ENCODE measurements at regions of chr1 and their contacts with region 1.

Region 1: DNA sequence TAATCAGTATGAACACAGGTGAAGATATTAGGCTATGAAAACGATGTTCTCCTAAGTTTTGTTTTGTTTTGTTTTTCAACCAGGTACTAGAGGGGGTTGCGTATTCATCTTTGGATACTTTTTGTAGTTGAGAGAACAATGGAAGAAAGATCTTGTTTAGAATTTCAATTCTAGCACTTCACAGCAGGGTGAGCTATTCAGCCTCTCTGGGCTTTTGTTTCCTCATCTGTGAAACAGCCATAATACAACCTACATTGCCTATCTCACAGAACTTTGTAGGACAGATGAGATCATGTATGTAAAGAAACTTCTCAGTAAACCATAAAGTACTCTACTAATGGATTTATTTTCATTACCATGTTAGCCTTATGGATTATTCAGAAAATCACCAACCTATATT is 199.5 kb downstream of the GPATCH2 start:
- DNase-seq: no peak
- H3K4me3 ChIP-seq: no peak overlapping the region
- H3K27ac ChIP-seq: no peak overlapping the region
- H3K4me1 ChIP-seq: peaks cover 7% of the 10 kb centered on the region
- H3K27me3 ChIP-seq: no peaks in the 10 kb centered on the region
- CTCF ChIP-seq: peak in 1 of 2 donors; percentile 49

Region 2: DNA sequence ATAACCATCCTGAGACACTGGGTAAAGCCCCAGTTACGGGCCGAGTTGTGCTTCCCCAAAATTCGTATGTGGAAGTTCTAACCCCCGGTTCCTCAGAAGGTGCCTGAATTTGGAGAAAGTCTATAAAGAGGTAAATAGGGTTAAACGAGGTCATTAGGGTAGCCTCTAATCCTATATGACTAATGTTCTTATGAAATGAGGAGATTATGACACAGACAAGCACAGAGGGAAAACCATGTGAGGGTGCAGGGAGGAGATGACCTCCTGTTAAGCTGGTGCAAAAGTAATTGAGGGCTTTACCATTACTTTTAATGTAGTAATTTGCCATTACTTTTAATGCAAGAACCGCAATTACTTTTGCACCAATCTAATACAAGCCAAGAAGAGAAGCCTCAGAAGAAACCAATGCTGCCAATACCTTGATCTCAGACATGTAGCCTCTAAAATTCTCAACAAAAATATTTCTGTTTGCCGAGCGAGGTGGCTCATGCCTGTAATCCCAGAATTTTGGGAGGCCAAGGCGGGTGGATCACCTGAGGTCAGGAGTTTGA is 61.3 kb before region 1 on chr1:
- CTCF ChIA-PET with region 1: no interaction called
- dilution Hi-C with region 1: loop called (anchors 5 kb)
- in situ Hi-C with region 1: no loop called
- intact Hi-C with region 1: no loop called
- DNase-seq: no peak
- H3K4me3 ChIP-seq: no peak overlapping the region
- H3K27ac ChIP-seq: no peak overlapping the region
- H3K4me1 ChIP-seq: peaks cover 9% of the 10 kb centered on the region
- H3K27me3 ChIP-seq: no peaks in the 10 kb centered on the region
- CTCF ChIP-seq: no peak

Region 3: DNA sequence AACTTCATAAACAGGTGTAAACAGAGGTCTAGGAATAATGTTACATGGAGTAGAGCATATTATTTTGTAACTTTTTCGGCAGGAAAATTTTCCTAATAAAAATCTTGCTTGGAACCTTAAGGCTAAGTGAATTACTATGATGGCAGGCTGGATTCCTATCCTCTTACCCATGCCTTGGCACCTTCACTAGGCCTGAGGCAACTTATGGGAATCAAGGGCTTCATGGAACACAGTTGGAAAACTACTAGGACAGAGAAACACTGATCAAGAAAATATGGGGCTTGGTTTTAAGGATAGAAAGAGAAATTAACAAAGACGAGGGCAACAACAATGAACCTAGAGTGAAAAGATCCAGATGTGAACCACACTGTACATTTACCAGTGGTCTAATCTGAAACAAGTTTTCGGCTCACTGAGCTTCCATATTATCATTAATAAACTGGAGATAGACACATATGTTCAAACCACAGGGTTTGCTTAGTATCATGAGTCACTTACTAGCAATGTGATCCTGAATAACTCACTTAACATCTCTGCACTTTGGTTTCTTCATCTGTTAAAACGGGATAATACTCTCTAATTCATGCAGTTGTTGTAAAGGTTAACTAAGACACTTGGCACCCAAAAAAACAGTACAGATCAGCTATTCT is 131.0 kb after region 1 on chr1:
- CTCF ChIA-PET with region 1: no interaction called
- dilution Hi-C with region 1: no loop called
- in situ Hi-C with region 1: no loop called
- intact Hi-C with region 1: loop called (anchors 10 kb)
- DNase-seq: peak; percentile 75
- H3K4me3 ChIP-seq: peak overlapping the region in 2 of 3 experiments; percentile 17 to 36
- H3K27ac ChIP-seq: peak overlapping the region; percentile 85
- H3K4me1 ChIP-seq: peaks cover 18% of the 10 kb centered on the region
- H3K27me3 ChIP-seq: no peaks in the 10 kb centered on the region
- CTCF ChIP-seq: no peak

Region 4: DNA sequence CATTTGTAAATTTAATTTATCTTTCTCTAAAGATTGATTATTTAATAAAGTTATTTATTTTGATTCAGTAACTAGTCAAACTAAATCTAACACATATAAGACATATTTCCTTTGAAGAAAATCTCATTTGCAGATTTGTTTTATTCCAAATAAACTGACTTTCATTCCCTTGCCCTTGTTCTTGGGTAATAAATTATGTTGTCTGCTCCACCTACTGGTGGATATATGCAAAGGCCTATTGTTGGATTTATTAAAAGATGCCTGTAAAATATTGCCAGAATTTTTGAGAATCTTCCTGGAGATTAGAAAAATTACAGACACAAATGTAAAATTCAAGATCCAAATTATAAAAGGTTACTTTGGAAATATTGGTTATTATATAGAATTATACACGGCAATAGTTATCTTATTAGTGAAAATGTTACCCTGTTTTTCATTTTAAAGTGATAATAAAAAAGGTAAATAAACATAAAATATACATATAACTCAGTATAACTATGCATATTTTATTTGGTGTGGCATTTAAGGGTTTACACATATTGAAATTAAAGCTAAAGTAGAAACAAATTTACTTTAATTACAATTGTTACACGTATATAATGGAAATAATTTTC is 315.9 kb after region 1 on chr1:
- CTCF ChIA-PET with region 1: no interaction called
- dilution Hi-C with region 1: no loop called
- in situ Hi-C with region 1: no loop called
- intact Hi-C with region 1: loop called (anchors 1 kb)
- DNase-seq: peak; percentile 14
- H3K4me3 ChIP-seq: no peak overlapping the region
- H3K27ac ChIP-seq: no peak overlapping the region
- H3K4me1 ChIP-seq: no peaks in the 10 kb centered on the region
- H3K27me3 ChIP-seq: no peaks in the 10 kb centered on the region
- CTCF ChIP-seq: peak; percentile 72 to 75